ENCODE measurements at regions of chr6 and their contacts with region 1.

Region 1: DNA sequence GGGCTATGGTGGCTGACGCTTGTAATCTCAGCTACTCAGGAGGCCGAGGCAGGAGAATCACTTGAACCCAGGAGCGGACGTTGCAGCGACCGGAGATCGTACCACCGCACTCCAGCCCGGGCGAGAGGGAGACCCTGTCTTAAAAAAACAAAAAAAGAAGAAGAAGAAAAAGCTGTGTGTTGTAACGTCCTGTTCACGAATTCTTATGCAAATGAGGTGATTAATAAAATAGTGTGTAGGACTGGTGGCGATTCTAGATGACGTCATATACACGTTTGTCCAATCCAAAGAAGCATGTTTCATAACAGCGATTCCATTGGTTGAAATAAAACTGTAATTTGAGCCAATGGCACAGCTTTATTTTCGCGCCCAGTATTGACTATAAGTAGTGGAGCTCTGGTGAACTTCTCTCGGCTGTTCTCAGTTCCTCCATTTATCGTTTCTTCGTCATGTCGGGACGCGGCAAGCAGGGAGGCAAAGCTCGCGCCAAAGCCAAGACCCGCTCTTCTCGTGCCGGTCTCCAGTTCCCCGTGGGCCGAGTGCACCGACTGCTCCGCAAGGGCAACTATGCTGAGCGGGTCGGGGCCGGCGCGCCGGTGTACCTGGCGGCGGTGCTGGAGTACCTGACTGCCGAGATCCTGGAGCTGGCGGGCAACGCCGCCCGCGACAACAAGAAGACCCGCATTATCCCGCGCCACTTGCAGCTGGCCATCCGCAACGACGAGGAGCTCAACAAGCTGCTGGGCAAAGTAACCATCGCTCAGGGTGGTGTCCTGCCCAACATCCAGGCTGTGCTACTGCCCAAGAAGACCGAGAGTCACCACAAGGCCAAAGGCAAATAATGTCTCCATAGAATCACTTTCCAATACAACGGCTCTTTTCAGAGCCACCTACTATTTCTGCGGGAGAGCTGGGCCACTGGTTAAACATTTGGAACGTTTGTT is 47.0 kb downstream of the OR2B2 start:
- DNase-seq: peak; percentile 73
- ATAC-seq: peak; percentile 51
- H3K4me3 Mint-ChIP-seq: peak overlapping the region; percentile 97
- H3K27ac Mint-ChIP-seq: peak overlapping the region; percentile 100
- H3K4me1 Mint-ChIP-seq: peaks cover 25% of the 10 kb centered on the region
- H3K27me3 Mint-ChIP-seq: peaks cover 4% of the 10 kb centered on the region; the same call in 1 of the 2 replicates
- CTCF ChIP-seq: no peak

Region 2: DNA sequence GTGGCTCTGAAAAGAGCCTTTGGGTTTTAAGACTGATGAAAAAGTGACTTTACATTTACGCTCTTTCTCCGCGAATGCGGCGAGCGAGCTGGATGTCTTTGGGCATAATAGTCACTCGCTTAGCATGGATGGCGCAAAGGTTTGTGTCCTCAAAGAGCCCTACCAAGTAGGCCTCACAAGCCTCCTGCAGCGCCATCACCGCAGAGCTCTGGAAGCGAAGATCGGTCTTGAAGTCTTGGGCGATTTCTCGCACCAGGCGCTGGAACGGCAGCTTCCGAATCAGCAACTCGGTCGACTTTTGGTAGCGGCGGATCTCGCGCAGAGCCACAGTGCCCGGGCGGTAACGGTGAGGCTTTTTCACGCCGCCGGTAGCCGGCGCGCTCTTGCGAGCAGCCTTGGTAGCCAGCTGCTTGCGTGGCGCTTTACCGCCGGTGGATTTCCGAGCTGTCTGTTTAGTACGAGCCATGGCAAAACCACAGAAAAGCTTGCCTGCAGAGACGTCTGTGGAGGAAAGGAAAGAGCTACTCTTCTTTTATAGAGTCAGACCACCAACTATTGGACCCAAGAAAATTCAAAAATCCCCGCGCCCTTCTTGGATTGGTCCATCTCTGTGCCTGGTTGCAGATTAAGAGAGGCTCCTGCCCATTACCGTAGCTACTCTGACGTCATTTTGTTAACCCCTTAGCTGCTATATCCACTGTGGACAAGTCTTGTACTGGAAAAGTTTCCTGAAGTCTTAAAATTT is 1833.4 kb before region 1 on chr6:
- CTCF ChIA-PET with region 1: no interaction called
- POLR2A ChIA-PET with region 1: interaction called, 64 read pairs
- DNase-seq: peak; percentile 80
- ATAC-seq: peak; percentile 67
- H3K4me3 Mint-ChIP-seq: peak overlapping the region; percentile 91
- H3K27ac Mint-ChIP-seq: peak overlapping the region; percentile 100
- H3K4me1 Mint-ChIP-seq: peaks cover 59% of the 10 kb centered on the region
- H3K27me3 Mint-ChIP-seq: no peaks in the 10 kb centered on the region
- CTCF ChIP-seq: no peak

Region 3: GRCh38 chr6:27132532-27133280 is 732.5 kb before region 1 on chr6:
- CTCF ChIA-PET with region 1: no interaction called
- POLR2A ChIA-PET with region 1: interaction called, 43 read pairs
- DNase-seq: peak; percentile 85
- ATAC-seq: peak; percentile 86
- H3K4me3 Mint-ChIP-seq: no peak overlapping the region
- H3K27ac Mint-ChIP-seq: no peak overlapping the region
- H3K4me1 Mint-ChIP-seq: peaks cover 65% of the 10 kb centered on the region
- H3K27me3 Mint-ChIP-seq: no peaks in the 10 kb centered on the region
- CTCF ChIP-seq: no peak

Region 4: GRCh38 chr6:27757307-27757706 is 107.9 kb before region 1 on chr6:
- CTCF ChIA-PET with region 1: no interaction called
- POLR2A ChIA-PET with region 1: no interaction called
- DNase-seq: peak; percentile 69
- ATAC-seq: peak; percentile 58
- H3K4me3 Mint-ChIP-seq: peak overlapping the region; percentile 64
- H3K27ac Mint-ChIP-seq: no peak overlapping the region
- H3K4me1 Mint-ChIP-seq: peaks cover 45% of the 10 kb centered on the region
- H3K27me3 Mint-ChIP-seq: peaks cover 82% of the 10 kb centered on the region
- CTCF ChIP-seq: no peak

Region 5: DNA sequence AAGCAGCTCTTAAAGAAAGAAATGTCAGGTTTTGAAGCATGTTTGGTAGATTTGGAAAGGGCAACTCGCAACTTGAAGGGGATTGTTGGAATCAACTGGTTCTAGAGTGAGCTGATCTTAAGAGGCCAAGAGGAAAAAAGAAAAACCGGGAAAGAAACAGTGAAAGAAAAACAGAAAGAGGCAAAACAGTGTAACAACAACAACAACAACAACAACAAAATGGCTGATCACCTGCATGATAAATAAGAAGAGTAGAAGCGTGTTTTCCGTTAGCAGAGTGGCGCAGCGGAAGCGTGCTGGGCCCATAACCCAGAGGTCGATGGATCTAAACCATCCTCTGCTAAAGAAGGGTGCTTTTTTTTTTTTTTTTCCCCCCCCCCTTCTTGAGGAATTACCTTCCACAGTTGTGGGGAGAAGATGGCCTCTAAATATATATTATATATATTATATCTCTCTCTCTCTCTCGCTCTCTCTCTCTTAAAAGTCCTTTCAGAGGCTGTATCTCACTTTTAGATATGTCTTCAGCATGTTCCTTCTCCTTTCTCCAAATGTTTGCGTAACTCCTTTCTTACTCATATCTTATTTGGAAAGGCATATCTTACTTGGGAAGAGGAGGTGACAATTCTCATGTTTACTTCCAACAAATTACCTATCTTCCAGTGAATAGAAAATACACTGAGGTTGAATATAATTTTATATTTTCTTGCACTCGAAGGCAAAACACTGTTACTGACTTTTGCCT is 87.4 kb before region 1 on chr6:
- CTCF ChIA-PET with region 1: no interaction called
- POLR2A ChIA-PET with region 1: no interaction called
- DNase-seq: peak; percentile 47
- ATAC-seq: peak; percentile 57
- H3K4me3 Mint-ChIP-seq: peak overlapping the region; percentile 71
- H3K27ac Mint-ChIP-seq: peak overlapping the region; percentile 30
- H3K4me1 Mint-ChIP-seq: peaks cover 20% of the 10 kb centered on the region
- H3K27me3 Mint-ChIP-seq: peaks cover 91% of the 10 kb centered on the region
- CTCF ChIP-seq: no peak

Region 6: GRCh38 chr6:27825025-27825793 is 40.0 kb before region 1 on chr6:
- CTCF ChIA-PET with region 1: no interaction called
- POLR2A ChIA-PET with region 1: interaction called, 88 read pairs
- DNase-seq: no peak
- ATAC-seq: no peak
- H3K4me3 Mint-ChIP-seq: peak overlapping the region; percentile 86
- H3K27ac Mint-ChIP-seq: peak overlapping the region; percentile 99
- H3K4me1 Mint-ChIP-seq: peaks cover 27% of the 10 kb centered on the region
- H3K27me3 Mint-ChIP-seq: no peaks in the 10 kb centered on the region
- CTCF ChIP-seq: no peak

Region 7: DNA sequence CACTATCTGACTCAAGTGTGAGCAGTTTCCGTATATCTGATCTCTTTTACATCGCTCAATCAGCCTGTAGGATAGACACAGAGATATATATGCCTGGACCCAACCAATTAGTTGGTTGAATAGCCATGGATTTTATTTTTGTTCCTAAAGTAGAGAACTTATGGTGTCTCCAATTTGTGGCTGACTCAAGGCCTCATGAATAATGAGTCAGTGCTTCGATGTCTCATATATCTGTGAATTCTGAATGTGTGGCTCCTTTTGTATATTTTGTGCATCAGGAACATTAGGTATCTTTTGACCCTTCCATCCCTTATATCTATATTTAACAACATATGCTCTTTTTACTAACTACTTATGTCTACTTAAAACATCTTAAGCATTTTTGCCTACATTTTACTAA is 17.5 kb before region 1 on chr6:
- CTCF ChIA-PET with region 1: interaction called, 4 read pairs
- POLR2A ChIA-PET with region 1: interaction called, 27 read pairs
- DNase-seq: no peak
- ATAC-seq: no peak
- H3K4me3 Mint-ChIP-seq: no peak overlapping the region
- H3K27ac Mint-ChIP-seq: no peak overlapping the region
- H3K4me1 Mint-ChIP-seq: peaks cover 10% of the 10 kb centered on the region
- H3K27me3 Mint-ChIP-seq: no peaks in the 10 kb centered on the region
- CTCF ChIP-seq: no peak

Measured in WTC11 (cell line).